CD8-positive, alpha-beta memory T cell (primary cell): ENCODE measurements at regions of chr4 and their contacts with region 1.

Region 1: GRCh38 chr4:40228497-40229365 is 31.9 kb downstream of the RHOH start:
- DNase-seq: no peak
- H3K4me3 ChIP-seq: peak overlapping the region; percentile 42
- H3K4me3 Mint-ChIP-seq: peak overlapping the region; percentile 78 to 88 (median 83)
- H3K27ac ChIP-seq: no peak overlapping the region
- H3K27ac Mint-ChIP-seq: peak overlapping the region; percentile 91 to 98 (median 95)
- H3K4me1 ChIP-seq: peaks cover 96% of the 10 kb centered on the region
- H3K4me1 Mint-ChIP-seq: peaks cover 83 to 100% (median 97%) of the 10 kb centered on the region in 3 donors
- H3K27me3 ChIP-seq: no peaks in the 10 kb centered on the region
- H3K27me3 Mint-ChIP-seq: peaks cover 0 to 1% of the 10 kb centered on the region in 2 donors

Region 2: DNA sequence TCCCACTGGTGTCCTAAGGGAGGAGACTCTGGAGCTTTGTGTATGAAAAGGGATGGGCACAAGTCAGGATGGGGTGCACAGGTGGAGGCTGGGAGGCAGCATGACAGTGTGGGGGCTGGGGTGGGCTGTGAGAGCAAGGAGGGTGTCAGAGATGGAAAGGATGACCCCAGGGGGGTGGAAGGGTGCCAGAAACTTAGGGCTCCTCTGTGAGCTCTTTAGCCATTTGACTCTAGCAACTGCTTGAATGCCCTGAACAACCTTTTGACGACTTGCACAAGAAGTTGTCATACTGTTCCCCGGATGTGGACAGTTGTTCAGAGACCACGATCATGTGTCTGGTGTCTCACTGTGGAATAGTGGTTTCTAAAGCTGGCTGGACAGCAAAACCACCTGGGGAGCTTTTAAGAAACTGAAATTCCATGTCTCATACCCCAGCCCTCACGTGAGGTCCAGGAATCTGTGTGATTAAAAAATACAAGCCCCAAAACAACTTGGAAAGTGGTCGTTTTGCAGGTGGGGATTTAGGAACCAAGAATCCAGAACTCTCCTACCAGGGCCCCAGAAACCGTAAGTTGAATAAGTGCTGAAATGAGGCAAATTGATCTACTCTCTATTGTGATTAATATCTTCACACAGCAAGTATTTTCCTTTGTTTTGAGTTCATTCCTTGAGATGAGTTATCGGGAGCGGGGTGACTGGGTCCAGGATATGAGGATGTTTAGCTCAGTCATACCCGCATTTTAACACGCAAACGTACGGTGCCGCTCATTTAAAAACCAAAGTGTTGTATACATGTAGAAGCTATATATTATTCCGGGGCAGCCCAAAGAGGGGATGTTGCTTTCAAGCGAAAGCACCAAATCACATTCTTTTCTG is 28.5 kb before region 1 on chr4:
- CTCF ChIA-PET with region 1: interaction called, 194 read pairs
- POLR2A ChIA-PET with region 1: interaction called, 14 read pairs
- DNase-seq: peak; percentile 38 to 81 (median 63)
- H3K4me3 ChIP-seq: peak overlapping the region; percentile 93
- H3K4me3 Mint-ChIP-seq: peak overlapping the region; percentile 93 to 100 (median 97)
- H3K27ac ChIP-seq: peak overlapping the region; percentile 96
- H3K27ac Mint-ChIP-seq: peak overlapping the region; percentile 94 to 100 (median 99)
- H3K4me1 ChIP-seq: peaks cover 38% of the 10 kb centered on the region
- H3K4me1 Mint-ChIP-seq: peaks cover 47 to 70% (median 58%) of the 10 kb centered on the region in 3 donors
- H3K27me3 ChIP-seq: no peaks in the 10 kb centered on the region
- H3K27me3 Mint-ChIP-seq: peaks cover 0 to 1% of the 10 kb centered on the region in 2 donors

Region 3: DNA sequence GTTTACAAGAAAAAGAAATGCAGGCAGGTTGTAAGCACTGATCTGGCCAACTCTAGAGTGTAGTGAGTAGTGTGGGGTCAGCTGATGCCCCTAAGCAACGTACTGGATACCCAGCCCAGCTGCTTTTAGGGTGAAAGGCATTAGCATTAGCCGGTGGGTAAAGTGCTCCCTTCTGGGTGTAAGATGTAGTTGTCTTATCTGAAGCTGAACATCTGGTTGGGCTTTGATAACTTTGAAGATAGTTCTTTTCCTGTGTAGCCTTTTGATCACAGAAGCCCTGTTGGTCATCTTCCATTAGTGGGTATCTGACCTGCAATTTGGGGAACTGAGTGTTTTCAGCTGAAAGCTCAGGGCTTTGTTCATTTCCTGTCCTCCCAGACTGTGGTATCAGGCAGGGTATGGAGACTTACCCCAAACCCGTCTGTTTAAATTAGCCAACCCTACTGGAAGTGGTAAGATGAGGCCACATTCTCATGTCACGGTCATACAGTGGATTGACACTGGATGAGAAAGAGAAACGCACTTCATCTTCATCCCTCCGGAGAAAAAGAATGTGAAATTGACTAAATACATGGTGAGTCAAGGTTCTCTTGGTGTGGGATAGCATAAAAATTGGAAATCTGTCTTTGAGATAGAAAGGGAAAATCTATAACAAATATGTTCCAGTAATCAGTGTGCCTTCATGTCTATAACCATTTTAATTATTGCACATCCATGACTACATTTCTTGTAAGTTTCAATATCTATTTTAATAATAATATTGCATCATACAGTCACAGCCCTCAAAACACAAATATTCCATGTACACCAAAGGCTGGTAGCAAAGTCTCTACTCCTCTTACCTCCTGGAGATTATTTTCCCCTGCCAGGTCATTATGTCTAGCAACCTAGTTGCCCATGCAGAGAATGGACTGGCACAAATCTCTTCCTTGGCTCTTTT is 23.2 kb before region 1 on chr4:
- CTCF ChIA-PET with region 1: interaction called, 194 read pairs
- POLR2A ChIA-PET with region 1: interaction called, 23 read pairs
- DNase-seq: peak in 2 of 5 donors; percentile 30 to 47
- H3K4me3 ChIP-seq: peak overlapping the region; percentile 49
- H3K4me3 Mint-ChIP-seq: peak overlapping the region; percentile 90 to 100 (median 97)
- H3K27ac ChIP-seq: peak overlapping the region; percentile 72
- H3K27ac Mint-ChIP-seq: peak overlapping the region; percentile 84 to 100 (median 94)
- H3K4me1 ChIP-seq: peaks cover 66% of the 10 kb centered on the region
- H3K4me1 Mint-ChIP-seq: peaks cover 76 to 96% (median 80%) of the 10 kb centered on the region in 3 donors
- H3K27me3 ChIP-seq: no peaks in the 10 kb centered on the region
- H3K27me3 Mint-ChIP-seq: peaks cover 0 to 2% of the 10 kb centered on the region in 2 donors

Region 4: DNA sequence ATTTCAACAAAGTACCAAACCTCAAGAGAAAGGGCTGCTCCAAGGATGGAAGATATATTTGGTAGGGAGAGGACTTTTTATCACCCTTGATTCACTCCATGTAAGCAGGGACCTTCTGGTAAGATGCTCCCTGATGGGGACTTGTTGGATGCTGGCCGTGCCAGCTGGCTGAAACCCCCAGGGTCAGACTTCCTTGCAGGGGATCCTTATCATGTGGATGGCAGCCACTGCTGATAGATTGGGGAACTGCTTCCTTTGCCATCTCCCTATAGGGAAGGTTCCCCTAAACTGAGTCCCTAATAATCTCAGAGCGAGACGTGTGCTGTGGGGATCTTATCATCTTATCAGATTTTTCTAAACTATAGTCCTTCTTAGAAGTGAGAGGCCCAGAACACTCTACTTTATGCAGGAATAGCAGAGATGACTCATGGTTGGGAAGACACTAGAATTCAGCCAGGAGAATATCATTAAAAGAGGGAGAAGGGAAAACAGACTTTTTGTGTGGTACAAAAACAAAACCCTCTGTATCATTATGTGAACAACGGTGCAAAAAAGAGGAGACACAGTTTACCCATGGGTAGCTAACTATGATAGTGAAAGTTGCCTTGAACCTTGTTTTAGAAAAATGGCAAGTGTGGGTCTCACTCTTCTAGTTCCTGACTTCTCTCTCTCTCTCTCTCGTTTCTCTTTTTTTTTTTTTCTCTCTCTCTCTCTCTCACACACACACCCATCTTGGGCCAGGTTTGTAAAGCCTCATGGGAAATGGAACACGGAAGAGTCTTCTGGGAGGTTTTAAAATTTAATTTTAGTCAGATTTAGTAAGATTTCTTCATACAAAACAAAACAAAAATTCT is 15.8 kb before region 1 on chr4:
- CTCF ChIA-PET with region 1: interaction called, 194 read pairs
- POLR2A ChIA-PET with region 1: interaction called, 33 read pairs
- DNase-seq: no peak
- H3K4me3 ChIP-seq: peak overlapping the region; percentile 21
- H3K4me3 Mint-ChIP-seq: peak overlapping the region; percentile 51 to 93 (median 78)
- H3K27ac ChIP-seq: no peak overlapping the region
- H3K27ac Mint-ChIP-seq: peak overlapping the region; percentile 85 to 97 (median 90)
- H3K4me1 ChIP-seq: peaks cover 93% of the 10 kb centered on the region
- H3K4me1 Mint-ChIP-seq: peaks cover 90 to 97% (median 94%) of the 10 kb centered on the region in 3 donors
- H3K27me3 ChIP-seq: no peaks in the 10 kb centered on the region
- H3K27me3 Mint-ChIP-seq: peaks cover 0 to 3% of the 10 kb centered on the region in 2 donors

Region 5: DNA sequence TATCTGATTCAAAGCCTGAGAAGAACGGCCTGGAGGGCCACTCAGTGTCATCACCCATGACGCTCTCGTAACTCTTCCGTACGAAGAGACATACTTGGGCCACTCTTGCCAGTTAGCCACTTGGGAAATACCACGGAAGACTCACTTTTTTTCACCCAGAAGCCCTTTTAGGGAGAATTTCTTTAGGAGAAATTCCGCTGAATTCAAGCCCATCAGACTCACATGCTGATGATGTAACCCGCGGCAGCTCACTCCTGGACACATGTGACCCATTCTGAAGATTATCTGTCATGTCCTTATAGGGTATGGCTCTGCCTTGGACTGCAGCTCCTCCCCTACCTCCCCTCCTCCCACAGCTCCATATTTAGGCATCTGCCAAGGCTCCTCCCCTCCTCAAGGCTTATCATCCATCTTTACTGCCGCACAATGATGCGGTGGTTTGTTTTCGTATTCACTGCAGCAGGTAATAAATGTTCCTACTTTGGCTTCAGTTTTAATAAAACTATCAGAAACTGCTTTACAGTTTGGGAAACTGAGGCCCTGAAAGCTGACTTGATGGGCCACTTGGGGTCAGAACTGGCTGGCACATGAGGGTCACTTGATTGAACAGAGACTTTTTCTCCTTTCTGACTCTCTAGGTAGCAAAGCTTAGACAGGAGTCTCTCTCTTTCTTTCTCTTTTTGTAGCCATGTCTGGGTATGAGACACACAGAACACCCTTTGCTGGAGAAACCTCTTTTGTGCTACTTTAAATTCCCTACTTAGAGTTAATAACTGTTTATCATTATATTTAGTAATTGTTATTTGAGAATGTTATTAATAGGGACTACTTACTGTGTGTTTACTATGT is 10.2 kb after region 1 on chr4:
- CTCF ChIA-PET with region 1: interaction called, 66 read pairs
- POLR2A ChIA-PET with region 1: interaction called, 26 read pairs
- DNase-seq: peak; percentile 59 to 93 (median 82)
- H3K4me3 ChIP-seq: peak overlapping the region; percentile 35
- H3K4me3 Mint-ChIP-seq: peak overlapping the region; percentile 70 to 94 (median 81)
- H3K27ac ChIP-seq: peak overlapping the region; percentile 91
- H3K27ac Mint-ChIP-seq: peak overlapping the region; percentile 94 to 100 (median 98)
- H3K4me1 ChIP-seq: peaks cover 96% of the 10 kb centered on the region
- H3K4me1 Mint-ChIP-seq: peaks cover 88 to 96% (median 96%) of the 10 kb centered on the region in 3 donors
- H3K27me3 ChIP-seq: no peaks in the 10 kb centered on the region
- H3K27me3 Mint-ChIP-seq: no peaks in the 10 kb centered on the region

Region 6: GRCh38 chr4:40247350-40247749 is 18.6 kb after region 1 on chr4:
- CTCF ChIA-PET with region 1: interaction called, 66 read pairs
- POLR2A ChIA-PET with region 1: interaction called, 26 read pairs
- DNase-seq: peak in 4 of 5 donors; percentile 41 to 87 (median 56)
- H3K4me3 ChIP-seq: no peak overlapping the region
- H3K4me3 Mint-ChIP-seq: peak overlapping the region; percentile 3 to 82 (median 67)
- H3K27ac ChIP-seq: no peak overlapping the region
- H3K27ac Mint-ChIP-seq: peak overlapping the region; percentile 40 to 97 (median 96)
- H3K4me1 ChIP-seq: peaks cover 81% of the 10 kb centered on the region
- H3K4me1 Mint-ChIP-seq: peaks cover 65 to 91% (median 80%) of the 10 kb centered on the region in 3 donors
- H3K27me3 ChIP-seq: no peaks in the 10 kb centered on the region
- H3K27me3 Mint-ChIP-seq: no peaks in the 10 kb centered on the region